Caki2 (cell line): ENCODE measurements at regions of chr7 and their contacts with region 1.

Region 1: DNA sequence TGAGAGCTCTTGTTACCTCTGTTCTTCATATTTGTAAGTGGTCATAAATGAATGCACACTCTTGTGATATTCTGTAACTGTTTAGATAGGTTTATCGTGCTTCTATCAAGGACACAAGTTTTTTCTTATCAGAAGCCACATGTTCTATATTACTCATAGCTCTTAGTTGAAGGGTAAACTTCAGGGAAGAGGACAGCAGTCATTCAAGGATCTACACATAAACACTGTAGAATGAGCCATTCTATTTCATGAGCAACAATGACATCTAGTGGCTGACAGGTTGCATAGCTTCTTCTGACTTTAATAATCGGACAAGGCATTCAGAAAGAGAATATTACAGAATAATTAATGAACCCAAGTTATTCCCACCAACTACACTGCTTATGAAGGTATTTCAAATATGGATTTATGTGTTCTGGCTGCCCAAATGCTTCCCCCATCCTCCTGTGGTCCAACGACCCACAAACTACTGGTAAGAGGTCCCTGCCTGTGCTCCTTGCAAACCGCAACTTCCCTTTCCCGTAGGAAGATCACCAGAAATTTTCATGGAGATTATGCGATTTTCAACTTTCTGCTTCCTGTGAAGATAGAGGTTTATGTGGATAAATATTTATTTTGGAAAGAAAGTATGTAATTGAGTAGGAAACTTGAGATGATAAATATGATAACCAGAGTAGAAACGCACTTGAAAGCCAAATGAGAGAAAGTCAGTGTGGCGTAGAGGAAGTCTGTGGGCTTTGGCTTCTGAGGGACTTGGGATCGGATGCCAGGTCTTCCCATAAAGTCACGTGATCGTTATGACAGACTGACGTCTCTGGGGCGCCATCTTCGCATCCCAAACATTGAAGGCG is 16.8 kb upstream of the ABCB5 start:
- DNase-seq: peak; percentile 58

Region 2: DNA sequence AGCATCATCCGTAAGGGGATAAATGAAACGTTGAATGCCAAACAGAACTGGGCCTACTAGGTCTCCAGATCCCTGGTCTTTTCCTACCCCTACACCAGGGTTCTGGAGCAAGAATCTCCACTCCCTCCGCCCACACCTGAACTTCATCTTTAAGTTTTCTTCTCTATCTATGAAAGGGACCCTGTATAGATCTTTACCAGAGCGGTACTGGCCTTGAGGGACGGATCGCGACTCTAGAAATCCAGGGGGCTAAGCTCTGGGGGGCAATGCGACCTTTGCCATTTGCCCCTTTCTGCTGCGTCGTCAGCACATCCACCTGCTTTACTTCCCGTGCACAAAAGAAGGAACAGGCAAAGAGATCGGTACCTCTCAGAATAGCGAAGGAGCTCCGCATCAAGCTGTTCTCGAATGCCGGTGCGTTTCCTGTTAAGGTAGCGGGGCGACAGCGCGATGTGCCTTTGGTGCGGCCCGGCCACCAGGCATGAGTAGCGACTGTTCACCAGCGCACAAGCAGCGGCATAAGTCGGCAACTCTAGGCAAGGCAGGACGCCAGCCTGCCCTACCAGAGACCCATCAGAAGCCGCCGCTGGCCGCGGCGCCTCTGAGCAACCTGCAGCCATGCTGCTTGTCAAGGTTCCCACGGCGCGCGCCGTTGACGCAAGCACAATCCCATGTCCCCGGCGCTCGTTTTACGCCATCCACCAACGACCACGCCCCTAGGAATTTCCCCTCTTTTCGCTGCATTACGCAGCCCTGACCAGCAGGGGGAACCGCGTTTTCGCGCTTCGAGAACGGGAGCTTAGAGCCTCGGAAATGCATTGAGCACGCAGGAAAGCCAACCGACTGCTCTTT is 890.1 kb before region 1 on chr7 and contains the start of gene POLR1F:
- in situ Hi-C with region 1: loop called (anchors 25 kb)
- DNase-seq: peak; percentile 96
- total RNA-seq, gene POLR1F: 15.7 and 27.0 TPM in 2 replicates

Region 3: GRCh38 chr7:20491284-20491683 is 107.4 kb before region 1 on chr7:
- in situ Hi-C with region 1: no loop called
- DNase-seq: no peak